BJ (cell line): ENCODE measurements at regions of chr16 and their contacts with region 1.

Region 1: DNA sequence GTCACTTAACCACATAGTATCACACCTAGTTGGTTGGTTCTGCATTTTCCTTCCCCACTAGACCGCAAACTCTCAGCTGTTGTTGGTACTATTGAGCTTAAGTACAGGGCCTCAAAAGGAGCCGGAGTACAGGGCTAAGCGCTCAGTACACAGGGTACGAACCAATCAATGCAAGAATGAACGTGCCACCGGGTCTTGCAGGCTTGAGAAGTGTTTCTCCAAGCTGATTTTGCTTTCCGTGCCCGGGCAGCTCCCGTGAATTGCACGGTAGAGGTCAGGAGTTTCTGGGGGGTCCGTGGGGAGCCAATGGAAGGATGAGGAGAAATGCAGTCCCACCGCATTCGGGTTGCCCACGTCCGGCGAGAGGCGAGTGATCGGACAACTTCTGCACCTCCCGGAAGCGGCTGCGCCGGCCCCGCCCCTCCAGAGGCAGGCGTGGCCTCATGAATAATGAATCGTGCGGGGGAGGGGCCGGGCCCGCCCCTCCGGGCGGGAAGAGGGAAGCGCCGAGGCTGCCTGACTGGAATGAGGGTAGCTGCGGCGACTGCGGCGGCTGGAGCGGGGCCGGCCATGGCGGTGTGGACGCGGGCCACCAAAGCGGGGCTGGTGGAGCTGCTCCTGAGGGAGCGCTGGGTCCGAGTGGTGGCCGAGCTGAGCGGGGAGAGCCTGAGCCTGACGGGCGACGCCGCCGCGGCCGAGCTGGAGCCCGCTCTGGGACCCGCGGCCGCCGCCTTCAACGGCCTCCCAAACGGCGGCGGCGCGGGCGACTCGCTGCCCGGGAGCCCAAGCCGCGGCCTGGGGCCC is at the start of gene SNTB2:
- DNase-seq: no peak
- H3K4me3 ChIP-seq: peak within 1 kb of the TSS; percentile 78
- H3K27me3 ChIP-seq: no peaks in the 10 kb centered on the region
- CTCF ChIP-seq: no peak
- polyA plus RNA-seq, gene SNTB2: 43.1 and 50.5 TPM in 2 replicates

Region 2: GRCh38 chr16:69166221-69166833 is 20.5 kb before region 1 on chr16:
- CTCF ChIA-PET with region 1: no interaction called
- POLR2A ChIA-PET with region 1: no interaction called
- DNase-seq: no peak
- H3K4me3 ChIP-seq: no peak overlapping the region
- H3K27me3 ChIP-seq: no peaks in the 10 kb centered on the region
- CTCF ChIP-seq: no peak

Region 3: GRCh38 chr16:69486683-69487082 is 299.8 kb after region 1 on chr16:
- CTCF ChIA-PET with region 1: no interaction called
- POLR2A ChIA-PET with region 1: no interaction called
- DNase-seq: no peak
- H3K4me3 ChIP-seq: no peak overlapping the region
- H3K27me3 ChIP-seq: no peaks in the 10 kb centered on the region
- CTCF ChIP-seq: no peak

Region 4: DNA sequence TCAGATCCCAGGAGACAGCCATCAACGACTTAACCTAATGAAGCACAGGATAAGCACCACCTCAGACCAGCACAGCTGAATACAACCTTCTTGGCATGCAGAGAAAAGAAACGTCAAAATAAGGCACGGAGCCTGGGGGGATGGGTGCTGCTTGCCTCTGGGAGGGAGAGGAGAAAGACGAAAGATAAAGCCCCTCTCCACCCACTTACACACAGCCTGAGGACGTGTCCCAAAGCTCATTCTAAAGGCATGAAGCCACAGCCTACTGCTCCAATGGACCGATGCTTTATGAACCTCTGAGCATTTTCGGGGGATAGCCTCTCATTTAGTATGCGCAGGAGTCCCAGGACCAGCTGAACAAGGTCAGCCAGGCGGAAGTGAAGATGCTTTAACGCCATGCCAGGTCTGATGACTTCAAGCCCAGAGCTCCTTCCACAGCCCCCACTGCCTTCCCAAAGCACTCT is 1221.0 kb after region 1 on chr16:
- CTCF ChIA-PET with region 1: no interaction called
- POLR2A ChIA-PET with region 1: interaction called, 16 read pairs
- DNase-seq: no peak
- H3K4me3 ChIP-seq: no peak overlapping the region
- H3K27me3 ChIP-seq: no peaks in the 10 kb centered on the region
- CTCF ChIP-seq: no peak